SK-N-SH (cell line): ENCODE measurements at regions of chr1 and their contacts with region 1.

Region 1: DNA sequence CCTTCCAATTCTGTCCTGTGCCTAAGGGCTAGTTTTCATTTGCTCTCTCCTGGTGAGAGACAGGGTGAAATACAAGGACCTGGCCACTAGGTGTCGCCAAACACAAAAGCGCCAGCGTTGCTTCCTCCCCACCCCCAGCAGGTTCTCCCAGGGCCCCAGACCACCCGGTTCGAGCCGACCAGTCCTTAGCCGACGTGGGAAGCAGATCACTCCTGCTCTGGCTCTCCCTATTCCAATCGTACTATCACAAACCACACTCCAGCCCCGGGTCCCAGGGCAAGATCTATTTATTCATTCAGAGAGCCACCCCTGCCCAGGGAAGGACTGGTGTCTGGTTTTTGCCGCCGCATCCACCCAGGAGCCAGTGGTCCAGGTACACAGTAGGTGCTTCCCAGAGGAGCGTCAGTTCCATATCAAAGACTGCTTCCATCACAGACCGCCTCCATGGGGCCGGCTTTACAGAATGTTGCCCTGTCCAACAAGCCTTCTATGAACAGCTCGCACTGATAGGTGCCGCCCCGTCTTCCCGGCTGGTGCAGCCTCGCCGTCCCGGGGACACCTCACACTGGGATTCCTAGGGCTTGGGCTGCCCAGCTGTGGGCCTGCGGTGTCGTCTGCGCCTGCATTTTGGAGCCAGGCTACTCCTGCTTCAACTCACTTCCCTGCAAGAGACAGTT is 35.0 kb downstream of the CTNNBIP1 start:
- DNase-seq: peak; percentile 98
- H3K4me3 ChIP-seq: no peak overlapping the region
- H3K27ac ChIP-seq: no peak overlapping the region; a peak in 1 of 4 replicates
- H3K4me1 ChIP-seq: peaks cover 4% of the 10 kb centered on the region in 2 experiments; a peak in 1 of 4 replicates
- H3K27me3 ChIP-seq: no peaks in the 10 kb centered on the region
- CTCF ChIP-seq: peak; percentile 94
- EP300 ChIP-seq: no peak
- RAD21 ChIP-seq: peak; percentile 93

Region 2: GRCh38 chr1:9606948-9607347 is 268.1 kb before region 1 on chr1:
- CTCF ChIA-PET with region 1: no interaction called
- POLR2A ChIA-PET with region 1: no interaction called
- DNase-seq: no peak
- H3K4me3 ChIP-seq: no peak overlapping the region
- H3K27ac ChIP-seq: peak overlapping the region in 1 of 2 experiments; percentile 77; a peak in 1 of 4 replicates
- H3K4me1 ChIP-seq: peaks cover 0 to 54% of the 10 kb centered on the region in 2 experiments; a peak in 2 of 4 replicates
- H3K27me3 ChIP-seq: no peaks in the 10 kb centered on the region
- CTCF ChIP-seq: no peak
- EP300 ChIP-seq: no peak
- RAD21 ChIP-seq: no peak

Region 3: DNA sequence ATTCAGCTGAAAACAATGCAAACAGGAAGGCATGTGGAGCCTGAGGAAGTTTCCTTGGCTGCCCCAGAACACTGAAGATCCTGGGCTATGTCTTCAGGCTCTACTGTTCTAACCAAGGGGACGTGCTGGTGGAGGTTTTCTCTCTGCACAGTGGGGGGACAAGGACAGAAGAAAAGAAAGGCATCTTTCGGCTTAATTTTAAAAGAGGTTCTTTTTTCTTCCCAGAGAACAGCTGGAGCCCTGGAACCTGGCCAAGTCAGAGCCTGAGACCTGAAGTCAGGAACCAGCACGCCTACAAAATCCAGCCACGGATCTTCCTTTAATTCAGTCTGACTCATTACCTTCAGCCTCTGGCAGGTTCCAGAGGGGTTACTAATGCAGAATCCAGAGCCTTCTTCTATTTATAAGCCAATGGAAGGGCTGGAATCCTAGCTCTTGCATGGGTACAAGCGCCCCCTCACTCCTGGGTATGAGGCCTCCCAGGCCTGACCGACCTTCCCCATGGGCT is 15.2 kb after region 1 on chr1:
- CTCF ChIA-PET with region 1: interaction called, 32 read pairs
- POLR2A ChIA-PET with region 1: no interaction called
- DNase-seq: no peak
- H3K4me3 ChIP-seq: no peak overlapping the region
- H3K27ac ChIP-seq: peak overlapping the region; percentile 63 to 83
- H3K4me1 ChIP-seq: peaks cover 22 to 39% of the 10 kb centered on the region in 2 experiments
- H3K27me3 ChIP-seq: no peaks in the 10 kb centered on the region
- CTCF ChIP-seq: no peak
- EP300 ChIP-seq: peak in 1 of 2 experiments; percentile 68; a peak in 2 of 4 replicates
- RAD21 ChIP-seq: no peak

Region 4: DNA sequence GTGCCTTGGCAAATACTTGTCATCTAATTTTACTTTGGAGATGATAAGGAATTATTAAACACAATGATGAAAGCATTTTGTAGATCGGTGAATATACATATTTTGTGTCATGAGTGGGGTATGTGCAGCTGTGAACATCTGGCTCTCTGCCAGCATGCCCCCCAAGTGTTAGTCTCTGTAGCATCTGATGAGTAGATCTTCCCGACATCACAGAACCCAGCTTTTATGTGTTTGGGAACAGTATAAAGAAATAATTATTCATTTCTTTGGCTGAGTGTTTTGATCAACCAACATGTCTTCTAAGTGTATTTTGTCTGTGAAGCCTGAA is 39.5 kb after region 1 on chr1:
- CTCF ChIA-PET with region 1: interaction called, 14 read pairs
- POLR2A ChIA-PET with region 1: no interaction called
- DNase-seq: no peak
- H3K4me3 ChIP-seq: no peak overlapping the region
- H3K27ac ChIP-seq: no peak overlapping the region
- H3K4me1 ChIP-seq: peaks cover 2 to 4% of the 10 kb centered on the region in 2 experiments; a peak in 2 of 4 replicates
- H3K27me3 ChIP-seq: no peaks in the 10 kb centered on the region
- CTCF ChIP-seq: no peak; the same call in 1 of the 2 replicates
- EP300 ChIP-seq: no peak
- RAD21 ChIP-seq: no peak

Region 5: GRCh38 chr1:9942939-9943788 is 68.1 kb after region 1 on chr1 and contains the starts of genes LZIC and NMNAT1:
- CTCF ChIA-PET with region 1: interaction called, 56 read pairs
- POLR2A ChIA-PET with region 1: no interaction called
- DNase-seq: peak; percentile 95
- H3K4me3 ChIP-seq: peak within 1 kb of the TSS; percentile 72 to 88
- H3K27ac ChIP-seq: peak within 1 kb of the TSS; percentile 78 to 81
- H3K4me1 ChIP-seq: peaks cover 3 to 4% of the 10 kb centered on the region in 2 experiments; a peak in 1 of 4 replicates
- H3K27me3 ChIP-seq: no peaks in the 10 kb centered on the region
- CTCF ChIP-seq: no peak
- EP300 ChIP-seq: no peak
- RAD21 ChIP-seq: no peak
- polyA plus RNA-seq, gene LZIC: 9.6 and 10.2 TPM in 2 replicates
- polyA plus RNA-seq, gene NMNAT1: 7.0 and 8.7 TPM in 2 replicates